Thyroid gland (tissue), 4 donors: ENCODE measurements at regions of chr10 and their contacts with region 1.

Region 1: GRCh38 chr10:22597138-22597537 is 117.2 kb downstream of the PIP4K2A start:
- DNase-seq: no peak
- H3K4me3 ChIP-seq: no peak overlapping the region
- H3K27ac ChIP-seq: no peak overlapping the region
- H3K4me1 ChIP-seq: peaks cover 0 to 24% of the 10 kb centered on the region in 2 donors
- H3K27me3 ChIP-seq: no peaks in the 10 kb centered on the region
- CTCF ChIP-seq: no peak
- POLR2A ChIP-seq: no peak

Region 2: GRCh38 chr10:22527520-22527919 is 69.6 kb before region 1 on chr10:
- intact Hi-C with region 1: no loop called
- DNase-seq: no peak
- H3K4me3 ChIP-seq: no peak overlapping the region
- H3K27ac ChIP-seq: no peak overlapping the region
- H3K4me1 ChIP-seq: no peaks in the 10 kb centered on the region
- H3K27me3 ChIP-seq: no peaks in the 10 kb centered on the region
- CTCF ChIP-seq: no peak
- POLR2A ChIP-seq: no peak

Region 3: DNA sequence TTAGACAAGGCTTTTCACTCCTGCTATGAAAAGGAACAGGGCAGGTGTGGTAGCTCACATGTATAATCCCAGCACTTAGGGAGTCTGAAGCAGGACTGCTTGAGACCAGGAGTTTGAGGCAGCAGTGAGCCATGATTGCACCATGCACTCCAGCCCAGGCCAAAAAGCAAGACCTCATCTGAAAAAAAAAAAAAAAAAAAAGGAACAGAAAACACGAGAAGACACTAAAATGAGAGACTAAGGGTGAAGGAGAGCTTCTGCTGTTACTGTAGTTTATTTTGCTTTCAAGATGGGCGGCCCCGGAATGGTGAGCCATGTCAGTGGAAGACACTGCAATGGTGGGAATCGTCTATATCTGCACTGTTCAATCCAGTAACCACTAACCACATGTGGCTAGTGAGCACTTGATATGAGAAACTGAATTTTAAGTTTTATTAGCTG is 107.4 kb after region 1 on chr10:
- intact Hi-C with region 1: no loop called
- DNase-seq: no peak
- H3K4me3 ChIP-seq: no peak overlapping the region
- H3K27ac ChIP-seq: no peak overlapping the region
- H3K4me1 ChIP-seq: peaks cover 5 to 9% of the 10 kb centered on the region in 2 donors
- H3K27me3 ChIP-seq: no peaks in the 10 kb centered on the region
- CTCF ChIP-seq: no peak
- POLR2A ChIP-seq: no peak

Region 4: DNA sequence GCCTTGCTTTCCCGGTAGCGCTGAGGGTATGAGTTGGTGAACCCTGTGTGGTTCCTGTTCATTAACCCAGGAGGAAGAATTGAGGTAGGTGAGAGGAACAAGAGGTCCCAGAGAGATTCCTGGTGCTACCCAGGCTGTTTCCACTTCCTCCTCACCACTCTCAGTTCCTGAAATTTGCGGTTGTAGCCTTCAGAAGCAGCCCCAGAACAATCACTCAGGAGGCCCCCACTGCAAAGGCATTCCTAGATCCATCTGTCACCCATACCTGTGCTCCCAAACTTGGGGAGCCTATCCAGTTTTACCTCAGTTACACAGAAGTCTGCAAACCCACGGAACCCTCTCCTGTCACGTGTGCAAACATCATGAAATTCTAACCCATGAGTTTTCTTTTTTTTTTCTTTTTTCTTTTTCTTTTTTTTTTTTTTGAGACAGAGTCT is 126.2 kb after region 1 on chr10:
- intact Hi-C with region 1: loop called (anchors 10 kb)
- DNase-seq: no peak
- H3K4me3 ChIP-seq: no peak overlapping the region
- H3K27ac ChIP-seq: no peak overlapping the region
- H3K4me1 ChIP-seq: no peaks in the 10 kb centered on the region
- H3K27me3 ChIP-seq: no peaks in the 10 kb centered on the region
- CTCF ChIP-seq: no peak
- POLR2A ChIP-seq: no peak

Region 5: GRCh38 chr10:23368816-23369640 is 771.9 kb after region 1 on chr10:
- intact Hi-C with region 1: no loop called
- DNase-seq: no peak
- H3K4me3 ChIP-seq: no peak overlapping the region
- H3K27ac ChIP-seq: peak overlapping the region; percentile 70 to 84 (median 78)
- H3K4me1 ChIP-seq: peaks cover 5 to 19% of the 10 kb centered on the region in 2 donors
- H3K27me3 ChIP-seq: no peaks in the 10 kb centered on the region
- CTCF ChIP-seq: no peak
- POLR2A ChIP-seq: no peak